ENCODE measurements at regions of chr20 and their contacts with region 1.

Region 1: GRCh38 chr20:50070991-50071888 is 41.7 kb downstream of the UBE2V1 start:
- DNase-seq: peak; percentile 43 to 100
- H3K4me3 ChIP-seq: peak overlapping the region in 2 of 4 experiments; percentile 23 to 43; a peak in 5 of 8 replicates
- H3K27ac ChIP-seq: no peak overlapping the region
- H3K4me1 ChIP-seq: peaks cover 0 to 2% (median under 1%) of the 10 kb centered on the region in 4 experiments; a peak in 3 of 7 replicates
- H3K27me3 ChIP-seq: no peaks in the 10 kb centered on the region
- CTCF ChIP-seq: peak; percentile 97 to 98 (median 97)
- EP300 ChIP-seq: no peak
- POLR2A ChIP-seq: no peak
- RAD21 ChIP-seq: peak; percentile 99 to 100

Region 2: GRCh38 chr20:49964964-49965780 is 106.1 kb before region 1 on chr20:
- CTCF ChIA-PET with region 1: interaction called, 18 read pairs
- POLR2A ChIA-PET with region 1: interaction called, 4 read pairs
- DNase-seq: peak in 1 of 2 experiments; percentile 84
- H3K4me3 ChIP-seq: no peak overlapping the region
- H3K27ac ChIP-seq: no peak overlapping the region
- H3K4me1 ChIP-seq: peaks cover 0 to 2% (median under 1%) of the 10 kb centered on the region in 4 experiments; a peak in 2 of 7 replicates
- H3K27me3 ChIP-seq: no peaks in the 10 kb centered on the region
- CTCF ChIP-seq: peak; percentile 74 to 92 (median 88)
- EP300 ChIP-seq: no peak
- POLR2A ChIP-seq: no peak
- RAD21 ChIP-seq: peak; percentile 48 to 66

Region 3: GRCh38 chr20:50012282-50013263 is 58.7 kb before region 1 on chr20:
- CTCF ChIA-PET with region 1: interaction called, 23 read pairs
- POLR2A ChIA-PET with region 1: interaction called, 3 read pairs
- DNase-seq: no peak
- H3K4me3 ChIP-seq: no peak overlapping the region
- H3K27ac ChIP-seq: no peak overlapping the region
- H3K4me1 ChIP-seq: peaks cover 0 to 23% (median 17%) of the 10 kb centered on the region in 4 experiments; a peak in 6 of 7 replicates
- H3K27me3 ChIP-seq: peaks cover 0 to 13% (median 9%) of the 10 kb centered on the region in 4 experiments; a peak in 4 of 7 replicates
- CTCF ChIP-seq: no peak
- EP300 ChIP-seq: no peak
- POLR2A ChIP-seq: no peak
- RAD21 ChIP-seq: no peak

Region 4: GRCh38 chr20:50044379-50044888 is 26.8 kb before region 1 on chr20:
- CTCF ChIA-PET with region 1: interaction called, 15 read pairs
- POLR2A ChIA-PET with region 1: interaction called, 3 read pairs
- DNase-seq: no peak
- H3K4me3 ChIP-seq: no peak overlapping the region
- H3K27ac ChIP-seq: no peak overlapping the region
- H3K4me1 ChIP-seq: peaks cover 0 to 9% (median 4%) of the 10 kb centered on the region in 4 experiments; a peak in 4 of 7 replicates
- H3K27me3 ChIP-seq: no peaks in the 10 kb centered on the region
- CTCF ChIP-seq: no peak
- EP300 ChIP-seq: no peak
- POLR2A ChIP-seq: no peak
- RAD21 ChIP-seq: no peak

Region 5: GRCh38 chr20:50085452-50086365 is 14.5 kb after region 1 on chr20:
- CTCF ChIA-PET with region 1: interaction called, 80 read pairs
- POLR2A ChIA-PET with region 1: interaction called, 20 read pairs
- DNase-seq: no peak
- H3K4me3 ChIP-seq: no peak overlapping the region
- H3K27ac ChIP-seq: no peak overlapping the region; the same call in 1 of the 2 replicates
- H3K4me1 ChIP-seq: peaks cover 0 to 13% (median 6%) of the 10 kb centered on the region in 4 experiments
- H3K27me3 ChIP-seq: no peaks in the 10 kb centered on the region; a peak in 1 of 7 replicates
- CTCF ChIP-seq: peak; percentile 38 to 83 (median 72)
- EP300 ChIP-seq: no peak
- POLR2A ChIP-seq: no peak
- RAD21 ChIP-seq: peak; percentile 79 to 88

Region 6: DNA sequence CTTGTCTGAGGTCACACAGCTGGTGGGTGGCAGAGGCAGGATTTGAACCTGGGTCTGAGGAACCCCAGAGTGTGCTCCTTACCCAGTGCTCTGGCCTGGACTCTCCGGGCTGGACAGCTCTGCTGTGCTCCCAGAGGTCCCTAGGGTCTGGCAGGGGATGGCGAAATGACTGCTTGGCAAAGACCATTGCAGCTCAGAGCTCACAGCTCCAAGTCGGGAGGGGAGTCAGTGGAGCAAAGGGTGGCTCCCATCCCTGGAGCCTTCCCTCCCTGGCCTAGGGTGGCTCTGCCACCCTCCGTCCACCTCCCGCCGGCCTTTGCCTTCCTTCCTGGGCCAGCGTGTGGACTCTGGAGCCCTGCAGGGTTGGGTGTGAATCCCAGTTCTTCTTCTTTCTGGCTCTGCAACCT is 136.8 kb after region 1 on chr20:
- CTCF ChIA-PET with region 1: no interaction called
- POLR2A ChIA-PET with region 1: no interaction called
- DNase-seq: no peak
- H3K4me3 ChIP-seq: no peak overlapping the region
- H3K27ac ChIP-seq: no peak overlapping the region
- H3K4me1 ChIP-seq: no peaks in the 10 kb centered on the region
- H3K27me3 ChIP-seq: no peaks in the 10 kb centered on the region
- CTCF ChIP-seq: no peak
- EP300 ChIP-seq: no peak
- POLR2A ChIP-seq: no peak
- RAD21 ChIP-seq: no peak

Region 7: DNA sequence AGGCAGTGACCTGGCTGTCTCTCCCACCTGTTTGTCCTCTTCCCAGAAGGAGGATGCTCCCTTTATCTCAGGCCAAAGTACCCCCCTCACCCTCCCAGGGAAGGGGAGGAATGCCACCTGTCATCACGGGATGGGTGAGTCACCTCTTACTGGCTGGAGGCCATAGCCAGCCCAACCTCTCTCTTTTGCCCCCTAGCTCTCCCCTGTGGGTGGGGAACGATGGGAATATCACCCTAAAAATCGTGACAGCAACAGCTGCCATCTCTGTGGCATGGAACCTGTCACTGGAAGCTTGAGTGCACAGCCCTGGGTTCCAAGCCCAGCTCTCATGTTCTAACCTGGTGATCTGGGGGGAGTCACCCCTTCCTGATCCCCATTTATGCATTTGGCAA is 301.5 kb after region 1 on chr20:
- CTCF ChIA-PET with region 1: no interaction called
- POLR2A ChIA-PET with region 1: no interaction called
- DNase-seq: no peak
- H3K4me3 ChIP-seq: no peak overlapping the region
- H3K27ac ChIP-seq: no peak overlapping the region
- H3K4me1 ChIP-seq: peaks cover 0 to 3% (median 0%) of the 10 kb centered on the region in 4 experiments; a peak in 2 of 7 replicates
- H3K27me3 ChIP-seq: no peaks in the 10 kb centered on the region
- CTCF ChIP-seq: no peak
- EP300 ChIP-seq: no peak
- POLR2A ChIP-seq: no peak
- RAD21 ChIP-seq: no peak

Measured in H1 (cell line).